Activated naive CD4-positive, alpha-beta T cell treated with anti-CD3 and anti-CD28 coated beads for 36 hours (primary cell): ENCODE measurements at regions of chr3 and their contacts with region 1.

Region 1: DNA sequence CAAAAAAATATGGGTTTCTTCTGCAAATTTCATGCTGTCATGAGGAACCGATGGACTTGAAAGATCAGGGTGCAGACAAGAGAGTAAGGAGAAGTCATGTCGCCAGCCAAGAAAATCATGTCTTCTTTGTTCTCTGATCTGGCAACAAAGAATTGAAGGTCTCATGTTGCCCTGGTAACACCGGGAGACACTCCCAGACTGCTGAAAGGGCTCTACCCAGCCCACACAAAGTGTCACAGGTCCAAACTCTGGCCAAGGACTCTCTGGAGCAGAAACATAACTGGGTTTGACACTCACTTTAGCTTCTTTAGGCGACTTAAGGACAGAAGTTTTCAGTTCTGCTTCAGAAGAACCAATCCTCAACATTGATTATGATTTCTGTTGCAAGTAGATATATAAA is 42.9 kb downstream of the SIDT1 start:
- DNase-seq: no peak
- H3K4me3 Mint-ChIP-seq: no peak overlapping the region
- H3K27ac Mint-ChIP-seq: no peak overlapping the region
- H3K4me1 Mint-ChIP-seq: peaks cover 8% of the 10 kb centered on the region
- H3K27me3 Mint-ChIP-seq: no peaks in the 10 kb centered on the region

Region 2: DNA sequence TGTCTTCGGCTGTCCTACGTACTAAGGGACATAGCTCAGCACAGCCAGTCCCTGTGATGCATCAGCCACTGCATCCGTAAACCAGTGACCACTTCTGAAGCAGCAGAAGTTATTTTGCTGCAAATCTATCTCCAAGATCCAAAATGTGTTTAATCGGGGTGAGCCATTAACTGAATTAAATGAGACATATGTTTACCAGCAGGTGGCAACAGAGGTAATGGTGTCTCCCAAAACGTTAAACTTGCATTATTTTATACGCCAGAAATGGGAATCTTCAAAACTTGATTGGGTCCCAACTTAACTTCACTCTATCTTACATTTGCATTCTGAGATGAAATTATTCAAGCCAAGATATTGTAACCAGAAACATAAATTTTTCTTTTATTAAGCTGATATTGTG is 439.1 kb before region 1 on chr3:
- CTCF ChIA-PET with region 1: no interaction called
- intact Hi-C with region 1: loop called (anchors 5 kb)
- DNase-seq: no peak
- H3K4me3 Mint-ChIP-seq: no peak overlapping the region
- H3K27ac Mint-ChIP-seq: no peak overlapping the region
- H3K4me1 Mint-ChIP-seq: peaks cover 3% of the 10 kb centered on the region
- H3K27me3 Mint-ChIP-seq: no peaks in the 10 kb centered on the region

Region 3: DNA sequence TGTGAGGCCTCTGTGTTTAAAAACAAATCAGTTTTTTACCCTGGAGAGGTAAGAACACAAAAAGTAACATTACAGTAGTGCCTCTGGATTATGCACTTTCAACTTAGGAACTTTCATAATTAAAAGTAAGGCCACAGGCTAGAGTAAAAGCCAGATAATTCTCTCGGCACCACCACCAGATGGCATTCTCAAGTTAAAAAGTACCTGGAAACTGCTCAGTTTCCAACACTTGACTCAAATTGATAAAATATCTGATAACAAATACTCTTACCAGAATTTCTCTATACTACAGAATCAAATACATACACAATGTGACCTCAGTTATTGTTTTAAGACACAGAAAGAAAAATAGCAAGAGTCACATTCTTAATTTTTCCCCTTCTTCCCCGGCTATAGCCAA is 80.2 kb before region 1 on chr3:
- CTCF ChIA-PET with region 1: interaction called, 76 read pairs
- intact Hi-C with region 1: loop called (anchors 1 kb)
- DNase-seq: peak; percentile 66
- H3K4me3 Mint-ChIP-seq: no peak overlapping the region
- H3K27ac Mint-ChIP-seq: no peak overlapping the region
- H3K4me1 Mint-ChIP-seq: no peaks in the 10 kb centered on the region
- H3K27me3 Mint-ChIP-seq: no peaks in the 10 kb centered on the region

Region 4: GRCh38 chr3:113531826-113532697 is 43.1 kb before region 1 on chr3 and contains the start of gene SIDT1:
- CTCF ChIA-PET with region 1: interaction called, 8 read pairs
- intact Hi-C with region 1: loop called (anchors 1 kb)
- DNase-seq: peak; percentile 82
- H3K4me3 Mint-ChIP-seq: peak within 1 kb of the TSS; percentile 97
- H3K27ac Mint-ChIP-seq: peak within 1 kb of the TSS; percentile 96
- H3K4me1 Mint-ChIP-seq: peaks cover 46% of the 10 kb centered on the region
- H3K27me3 Mint-ChIP-seq: no peaks in the 10 kb centered on the region
- total RNA-seq, gene SIDT1: 14.6 to 14.9 TPM

Region 5: GRCh38 chr3:113560831-113561623 is 14.2 kb before region 1 on chr3:
- CTCF ChIA-PET with region 1: interaction called, 22 read pairs
- intact Hi-C with region 1: no loop called
- DNase-seq: no peak
- H3K4me3 Mint-ChIP-seq: no peak overlapping the region
- H3K27ac Mint-ChIP-seq: no peak overlapping the region
- H3K4me1 Mint-ChIP-seq: peaks cover 19% of the 10 kb centered on the region
- H3K27me3 Mint-ChIP-seq: no peaks in the 10 kb centered on the region

Region 6: GRCh38 chr3:113606539-113607218 is 31.5 kb after region 1 on chr3:
- CTCF ChIA-PET with region 1: interaction called, 10 read pairs
- intact Hi-C with region 1: no loop called
- DNase-seq: peak; percentile 74
- H3K4me3 Mint-ChIP-seq: peak overlapping the region; percentile 27
- H3K27ac Mint-ChIP-seq: peak overlapping the region; percentile 46
- H3K4me1 Mint-ChIP-seq: peaks cover 21% of the 10 kb centered on the region
- H3K27me3 Mint-ChIP-seq: no peaks in the 10 kb centered on the region

Region 7: DNA sequence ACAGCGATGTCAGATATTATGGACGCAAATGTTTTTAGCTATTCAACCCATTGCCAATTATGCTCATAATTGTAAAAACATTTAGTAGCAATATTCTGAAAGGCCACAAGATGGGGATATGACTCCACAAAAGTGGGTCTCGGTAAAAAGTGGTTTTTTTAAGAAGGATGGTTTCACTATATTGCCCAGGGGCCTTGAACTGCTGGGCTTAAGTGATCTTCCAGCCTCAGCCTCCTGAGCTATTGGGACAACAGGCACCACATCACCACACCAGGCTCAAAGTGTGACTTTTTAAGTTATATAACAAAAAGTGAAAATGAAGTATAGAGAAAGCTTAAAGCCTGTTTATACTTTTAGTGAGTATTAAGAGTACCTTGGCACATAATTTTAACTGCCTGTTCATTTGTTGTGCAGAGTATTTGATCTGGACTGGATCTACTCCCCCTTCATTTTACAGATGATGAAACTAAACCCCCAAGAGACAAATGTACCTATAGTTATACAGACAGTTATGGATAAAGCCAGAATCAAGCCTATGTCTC is 161.4 kb after region 1 on chr3:
- CTCF ChIA-PET with region 1: no interaction called
- intact Hi-C with region 1: loop called (anchors 2 kb)
- DNase-seq: no peak
- H3K4me3 Mint-ChIP-seq: no peak overlapping the region
- H3K27ac Mint-ChIP-seq: peak overlapping the region; percentile 56
- H3K4me1 Mint-ChIP-seq: peaks cover 65% of the 10 kb centered on the region
- H3K27me3 Mint-ChIP-seq: no peaks in the 10 kb centered on the region